Activated CD4-positive, alpha-beta T cell treated with anti-CD3 and anti-CD28 coated beads, Interleukin-2, amount 10 ng/mL, durations not matched to agents 24 days and 14 days (primary cell): ENCODE measurements at regions of chr1 and their contacts with region 1.

Region 1: GRCh38 chr1:151070474-151071276 is at the start of gene GABPB2:
- DNase-seq: peak; percentile 96
- H3K4me3 Mint-ChIP-seq: peak within 1 kb of the TSS; percentile 91
- H3K27ac Mint-ChIP-seq: peak within 1 kb of the TSS; percentile 99
- H3K4me1 Mint-ChIP-seq: peaks cover 17% of the 10 kb centered on the region
- H3K27me3 Mint-ChIP-seq: no peaks in the 10 kb centered on the region
- total RNA-seq, gene GABPB2: 19.4 and 20.3 TPM in 2 replicates

Region 2: GRCh38 chr1:151024540-151025146 is 46.0 kb before region 1 on chr1:
- intact Hi-C with region 1: loop called (anchors 1 kb)
- DNase-seq: peak; percentile 95
- H3K4me3 Mint-ChIP-seq: peak overlapping the region; percentile 30
- H3K27ac Mint-ChIP-seq: peak overlapping the region; percentile 59
- H3K4me1 Mint-ChIP-seq: peaks cover 7% of the 10 kb centered on the region
- H3K27me3 Mint-ChIP-seq: no peaks in the 10 kb centered on the region

Region 3: GRCh38 chr1:151047925-151048645 is 22.6 kb before region 1 on chr1:
- intact Hi-C with region 1: loop called (anchors 2 kb)
- DNase-seq: peak; percentile 86
- H3K4me3 Mint-ChIP-seq: peak overlapping the region; percentile 93
- H3K27ac Mint-ChIP-seq: peak overlapping the region; percentile 84
- H3K4me1 Mint-ChIP-seq: peaks cover 45% of the 10 kb centered on the region
- H3K27me3 Mint-ChIP-seq: no peaks in the 10 kb centered on the region

Region 4: GRCh38 chr1:151059078-151059907 is 11.4 kb before region 1 on chr1 and contains the start of gene CDC42SE1:
- intact Hi-C with region 1: loop called (anchors 1 kb)
- DNase-seq: peak; percentile 96
- H3K4me3 Mint-ChIP-seq: peak within 1 kb of the TSS; percentile 99
- H3K27ac Mint-ChIP-seq: peak within 1 kb of the TSS; percentile 99
- H3K4me1 Mint-ChIP-seq: peaks cover 63% of the 10 kb centered on the region
- H3K27me3 Mint-ChIP-seq: no peaks in the 10 kb centered on the region
- total RNA-seq, gene CDC42SE1: 189 and 190 TPM in 2 replicates

Region 5: DNA sequence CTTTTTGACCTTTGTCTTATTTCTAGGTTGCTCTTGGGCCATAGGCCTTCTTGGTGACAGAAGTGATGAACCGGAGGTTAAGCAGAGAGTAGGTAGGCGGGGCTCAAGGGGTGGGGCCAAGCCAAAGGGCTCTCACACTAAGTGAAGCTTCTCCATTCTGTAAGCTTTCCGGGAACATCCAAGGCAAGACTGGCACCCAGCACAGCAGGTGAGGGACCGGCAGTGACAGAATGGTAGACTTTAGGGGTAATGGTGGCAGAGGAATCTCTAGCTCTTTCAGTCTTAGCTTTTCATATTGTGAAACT is 85.8 kb after region 1 on chr1 and contains the start of gene TNFAIP8L2:
- intact Hi-C with region 1: loop called (anchors 1 kb)
- DNase-seq: peak; percentile 94
- H3K4me3 Mint-ChIP-seq: peak within 1 kb of the TSS; percentile 97
- H3K27ac Mint-ChIP-seq: peak within 1 kb of the TSS; percentile 96
- H3K4me1 Mint-ChIP-seq: peaks cover 42% of the 10 kb centered on the region
- H3K27me3 Mint-ChIP-seq: no peaks in the 10 kb centered on the region
- total RNA-seq, gene TNFAIP8L2: 29.4 and 32.5 TPM in 2 replicates

Region 6: GRCh38 chr1:151175910-151176309 is 105.2 kb after region 1 on chr1 and contains the start of gene TMOD4:
- intact Hi-C with region 1: no loop called
- DNase-seq: no peak
- H3K4me3 Mint-ChIP-seq: no peak within 1 kb of the TSS
- H3K27ac Mint-ChIP-seq: peak within 1 kb of the TSS; percentile 38
- H3K4me1 Mint-ChIP-seq: peaks cover 1% of the 10 kb centered on the region
- H3K27me3 Mint-ChIP-seq: no peaks in the 10 kb centered on the region
- total RNA-seq, gene TMOD4: 1.3 and 1.8 TPM in 2 replicates

Region 7: GRCh38 chr1:151254217-151255213 is 183.8 kb after region 1 on chr1 and contains the start of gene PSMD4:
- intact Hi-C with region 1: loop called (anchors 2 kb)
- DNase-seq: peak; percentile 98
- H3K4me3 Mint-ChIP-seq: peak within 1 kb of the TSS; percentile 90
- H3K27ac Mint-ChIP-seq: peak within 1 kb of the TSS; percentile 94
- H3K4me1 Mint-ChIP-seq: peaks cover 25% of the 10 kb centered on the region
- H3K27me3 Mint-ChIP-seq: no peaks in the 10 kb centered on the region
- total RNA-seq, gene PSMD4: 288 and 304 TPM in 2 replicates

Region 8: GRCh38 chr1:151281969-151282882 is 211.6 kb after region 1 on chr1 and contains the start of gene ZNF687:
- intact Hi-C with region 1: loop called (anchors 1 kb)
- DNase-seq: peak; percentile 99
- H3K4me3 Mint-ChIP-seq: peak within 1 kb of the TSS; percentile 99
- H3K27ac Mint-ChIP-seq: peak within 1 kb of the TSS; percentile 100
- H3K4me1 Mint-ChIP-seq: peaks cover 26% of the 10 kb centered on the region
- H3K27me3 Mint-ChIP-seq: no peaks in the 10 kb centered on the region
- total RNA-seq, gene ZNF687: 25.4 and 26.8 TPM in 2 replicates